T-cell (primary cell): ENCODE measurements at regions of chr21 and their contacts with region 1.

Region 1: DNA sequence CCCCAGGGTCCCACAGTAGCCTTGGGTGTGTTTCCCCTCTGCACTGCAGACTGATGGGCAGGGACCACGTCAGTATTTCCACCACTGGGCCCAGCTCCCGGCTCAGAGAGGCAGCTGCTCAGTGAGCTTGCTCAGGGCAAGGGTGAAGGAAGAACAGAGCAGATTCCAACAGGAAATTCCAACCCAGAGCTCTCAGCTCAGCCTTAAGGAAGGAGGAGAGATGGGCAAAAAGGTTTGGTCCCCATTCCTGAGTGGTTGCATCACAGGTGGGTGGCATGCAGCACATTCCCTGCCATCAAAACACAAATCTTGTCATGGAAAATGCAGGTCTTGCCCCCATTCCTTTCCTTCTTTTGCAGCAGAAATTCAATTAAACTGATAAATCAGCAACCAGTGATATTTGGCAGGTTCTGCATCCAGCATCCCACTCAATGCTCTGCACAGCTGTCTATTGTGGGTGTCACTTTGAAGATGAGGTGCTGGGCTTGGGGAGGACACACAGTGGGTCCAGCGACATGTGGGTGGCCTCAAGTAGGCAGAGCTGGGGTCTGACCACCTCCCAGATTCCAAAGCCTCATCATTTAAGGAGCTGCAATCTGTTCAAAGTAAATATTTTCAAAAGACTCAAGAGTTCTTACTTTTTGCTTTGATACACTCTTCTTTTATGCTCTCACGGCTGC is 315.4 kb downstream of the DSCAM start:
- DNase-seq: no peak
- ATAC-seq: no peak
- H3K4me3 ChIP-seq: no peak overlapping the region
- H3K4me3 Mint-ChIP-seq: no peak overlapping the region
- H3K27ac ChIP-seq: no peak overlapping the region
- H3K27ac Mint-ChIP-seq: no peak overlapping the region
- H3K4me1 ChIP-seq: no peaks in the 10 kb centered on the region
- H3K4me1 Mint-ChIP-seq: no peaks in the 10 kb centered on the region
- H3K27me3 ChIP-seq: no peaks in the 10 kb centered on the region
- H3K27me3 Mint-ChIP-seq: no peaks in the 10 kb centered on the region

Region 2: DNA sequence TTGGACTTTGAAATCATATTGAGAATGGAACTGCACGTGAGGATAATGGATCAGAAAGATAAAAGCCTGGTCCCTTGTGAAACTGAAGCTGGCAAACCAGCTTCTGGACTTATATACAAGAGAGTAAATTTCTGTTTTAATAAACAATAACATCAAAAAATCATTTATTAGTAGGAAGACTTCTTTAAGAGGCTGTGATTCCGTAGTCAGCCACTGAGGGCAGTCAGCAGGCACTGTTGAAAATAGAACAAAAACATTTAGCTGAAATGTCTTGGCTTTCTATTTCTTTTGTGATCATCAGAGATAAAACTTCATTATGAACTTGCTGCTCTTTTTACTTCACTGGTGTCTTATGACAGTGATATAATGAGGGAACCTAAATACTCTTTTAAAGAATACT is 174.9 kb before region 1 on chr21:
- CTCF ChIA-PET with region 1: no interaction called
- POLR2A ChIA-PET with region 1: no interaction called
- DNase-seq: no peak
- ATAC-seq: no peak
- H3K4me3 ChIP-seq: no peak overlapping the region
- H3K4me3 Mint-ChIP-seq: no peak overlapping the region
- H3K27ac ChIP-seq: no peak overlapping the region
- H3K27ac Mint-ChIP-seq: no peak overlapping the region
- H3K4me1 ChIP-seq: no peaks in the 10 kb centered on the region
- H3K4me1 Mint-ChIP-seq: no peaks in the 10 kb centered on the region
- H3K27me3 ChIP-seq: no peaks in the 10 kb centered on the region
- H3K27me3 Mint-ChIP-seq: peaks cover 0 to 4% of the 10 kb centered on the region in 2 donors

Region 3: GRCh38 chr21:40466893-40467501 is 64.6 kb before region 1 on chr21:
- CTCF ChIA-PET with region 1: no interaction called
- POLR2A ChIA-PET with region 1: no interaction called
- DNase-seq: no peak
- ATAC-seq: no peak
- H3K4me3 ChIP-seq: no peak overlapping the region
- H3K4me3 Mint-ChIP-seq: no peak overlapping the region
- H3K27ac ChIP-seq: no peak overlapping the region
- H3K27ac Mint-ChIP-seq: no peak overlapping the region
- H3K4me1 ChIP-seq: no peaks in the 10 kb centered on the region
- H3K4me1 Mint-ChIP-seq: no peaks in the 10 kb centered on the region
- H3K27me3 ChIP-seq: no peaks in the 10 kb centered on the region
- H3K27me3 Mint-ChIP-seq: peaks cover 3 to 4% of the 10 kb centered on the region in 2 donors

Region 4: DNA sequence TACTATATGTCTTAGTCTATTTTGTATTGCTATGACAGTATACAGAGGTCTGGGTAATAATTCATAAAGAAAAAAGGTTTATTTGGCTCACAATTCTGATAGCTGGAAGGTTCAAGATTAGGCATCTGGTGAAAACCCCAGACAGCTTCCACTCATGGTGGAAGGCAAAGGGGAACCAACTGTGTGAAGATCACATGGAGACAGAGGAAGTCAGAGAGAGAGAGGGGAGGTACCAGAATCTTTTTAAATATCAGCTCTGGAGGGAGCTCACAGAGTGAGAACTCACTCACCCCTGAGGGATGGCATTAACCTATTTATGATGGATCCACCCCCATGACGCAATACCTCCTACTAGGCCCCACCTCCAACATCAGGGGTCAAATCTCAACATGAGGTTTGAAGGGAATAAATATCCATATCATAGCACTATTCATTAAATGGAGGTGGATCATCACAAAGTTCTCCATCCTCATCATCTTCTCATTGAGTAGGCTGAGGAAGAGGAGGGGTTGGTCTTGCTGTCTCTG is 24.9 kb after region 1 on chr21:
- CTCF ChIA-PET with region 1: no interaction called
- POLR2A ChIA-PET with region 1: no interaction called
- DNase-seq: no peak
- ATAC-seq: no peak
- H3K4me3 ChIP-seq: no peak overlapping the region
- H3K4me3 Mint-ChIP-seq: no peak overlapping the region
- H3K27ac ChIP-seq: no peak overlapping the region
- H3K27ac Mint-ChIP-seq: no peak overlapping the region
- H3K4me1 ChIP-seq: no peaks in the 10 kb centered on the region
- H3K4me1 Mint-ChIP-seq: no peaks in the 10 kb centered on the region
- H3K27me3 ChIP-seq: no peaks in the 10 kb centered on the region
- H3K27me3 Mint-ChIP-seq: peaks cover 0 to 5% of the 10 kb centered on the region in 2 donors

Region 5: DNA sequence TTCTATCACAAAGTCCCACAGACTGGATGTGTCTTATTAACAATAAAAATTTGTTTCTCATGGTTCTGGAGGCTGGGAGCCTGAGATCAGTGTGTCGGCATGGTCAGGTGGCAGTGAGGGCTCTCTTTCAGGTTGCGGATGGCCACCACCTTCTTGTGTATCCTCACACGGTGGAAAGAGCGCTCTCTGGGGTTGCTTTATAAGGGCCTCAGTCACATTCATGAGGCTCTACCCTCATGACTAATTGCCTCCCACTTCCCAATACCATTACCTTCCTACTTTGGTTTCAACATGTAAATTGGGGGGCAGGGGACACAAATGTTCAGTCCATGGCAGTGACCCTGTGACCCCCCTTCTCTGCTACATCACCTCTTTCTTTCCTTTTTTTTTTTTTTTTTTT is 873.8 kb after region 1 on chr21:
- CTCF ChIA-PET with region 1: interaction called in 1 of 2 experiments, 10 read pairs
- POLR2A ChIA-PET with region 1: no interaction called
- DNase-seq: no peak
- ATAC-seq: no peak
- H3K4me3 ChIP-seq: no peak overlapping the region
- H3K4me3 Mint-ChIP-seq: no peak overlapping the region
- H3K27ac ChIP-seq: no peak overlapping the region
- H3K27ac Mint-ChIP-seq: no peak overlapping the region
- H3K4me1 ChIP-seq: no peaks in the 10 kb centered on the region
- H3K4me1 Mint-ChIP-seq: peaks cover 0 to under 1% (median 0%) of the 10 kb centered on the region in 3 donors
- H3K27me3 ChIP-seq: no peaks in the 10 kb centered on the region
- H3K27me3 Mint-ChIP-seq: no peaks in the 10 kb centered on the region